ENCODE measurements at regions of chr6 and their contacts with region 1.

Region 1: GRCh38 chr6:22091424-22091948 is 205.3 kb downstream of the PRL start:
- DNase-seq: no peak
- H3K4me3 Mint-ChIP-seq: no peak overlapping the region
- H3K27ac Mint-ChIP-seq: no peak overlapping the region
- H3K4me1 Mint-ChIP-seq: no peaks in the 10 kb centered on the region
- H3K27me3 Mint-ChIP-seq: no peaks in the 10 kb centered on the region

Region 2: GRCh38 chr6:22017272-22017671 is 74.2 kb before region 1 on chr6:
- CTCF ChIA-PET with region 1: no interaction called
- POLR2A ChIA-PET with region 1: no interaction called
- intact Hi-C with region 1: no loop called
- DNase-seq: no peak
- H3K4me3 Mint-ChIP-seq: no peak overlapping the region
- H3K27ac Mint-ChIP-seq: no peak overlapping the region
- H3K4me1 Mint-ChIP-seq: no peaks in the 10 kb centered on the region
- H3K27me3 Mint-ChIP-seq: no peaks in the 10 kb centered on the region

Region 3: DNA sequence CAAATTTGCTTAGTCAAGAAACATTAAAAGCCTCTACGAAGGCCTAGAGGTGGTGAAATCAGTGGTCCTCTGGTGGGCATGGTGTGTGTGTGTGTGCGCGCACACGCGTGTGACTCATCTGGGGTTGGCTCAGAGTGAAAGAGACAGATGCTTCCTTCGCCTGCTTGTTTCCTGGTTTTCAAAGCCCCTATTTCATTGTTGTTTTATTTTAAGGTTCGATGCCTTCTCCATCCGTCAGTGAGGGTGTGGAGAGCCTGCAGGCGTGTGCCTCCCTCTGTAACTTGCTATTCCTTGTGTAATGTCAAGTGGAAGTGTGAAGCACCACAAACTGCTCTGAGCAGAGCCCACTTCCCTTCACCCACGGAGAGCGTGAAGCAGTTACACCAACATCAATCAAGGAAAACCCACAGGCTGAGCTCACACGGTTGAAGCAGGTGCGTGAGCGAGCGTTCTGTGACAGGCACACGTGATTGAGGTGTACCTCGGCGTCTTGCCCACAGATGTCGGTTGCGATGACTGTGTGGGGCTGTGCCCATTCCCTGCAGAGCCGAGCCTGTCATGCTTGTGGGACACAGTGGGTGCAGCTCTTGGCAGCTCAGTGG is 28.6 kb before region 1 on chr6:
- CTCF ChIA-PET with region 1: no interaction called
- POLR2A ChIA-PET with region 1: no interaction called
- intact Hi-C with region 1: loop called (anchors 1 kb)
- DNase-seq: peak; percentile 54
- H3K4me3 Mint-ChIP-seq: no peak overlapping the region
- H3K27ac Mint-ChIP-seq: no peak overlapping the region
- H3K4me1 Mint-ChIP-seq: peaks cover 6% of the 10 kb centered on the region
- H3K27me3 Mint-ChIP-seq: peaks cover 8% of the 10 kb centered on the region

Region 4: DNA sequence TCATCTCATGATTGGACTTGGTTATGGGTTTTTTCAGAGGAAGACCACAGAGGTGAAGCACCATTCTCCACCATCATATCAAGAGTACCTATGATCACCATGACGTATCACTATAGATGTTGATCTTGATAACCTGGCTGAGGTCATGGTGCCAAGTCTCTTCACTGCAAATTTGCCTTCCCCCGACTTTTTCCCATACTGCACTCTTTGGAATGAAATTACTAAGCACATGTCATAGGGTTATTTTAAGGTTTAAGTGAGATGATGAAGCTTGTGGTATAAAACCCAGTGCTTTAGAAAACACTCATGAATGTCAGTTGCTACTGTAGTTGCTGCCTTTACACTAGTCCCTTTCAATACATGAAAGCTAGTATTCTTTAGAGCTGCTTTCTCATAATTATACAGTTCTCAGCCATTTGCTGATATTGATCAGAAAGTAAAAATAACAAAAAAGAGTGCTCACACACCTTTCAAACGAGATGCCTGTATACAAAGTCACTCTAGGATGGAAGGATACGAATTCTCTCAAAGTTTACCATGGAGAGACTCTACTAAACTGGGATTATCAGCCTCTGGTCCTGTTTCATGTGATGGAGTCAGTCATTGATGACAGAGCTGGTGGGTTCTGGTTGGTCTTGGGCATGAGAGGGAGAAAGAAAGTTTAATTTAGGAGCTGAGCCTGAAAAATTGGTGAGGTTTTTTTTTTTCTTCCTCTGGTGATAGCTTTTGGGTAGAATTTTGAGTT is 22.8 kb before region 1 on chr6:
- CTCF ChIA-PET with region 1: no interaction called
- POLR2A ChIA-PET with region 1: no interaction called
- intact Hi-C with region 1: loop called (anchors 1 kb)
- DNase-seq: no peak
- H3K4me3 Mint-ChIP-seq: no peak overlapping the region
- H3K27ac Mint-ChIP-seq: no peak overlapping the region
- H3K4me1 Mint-ChIP-seq: no peaks in the 10 kb centered on the region
- H3K27me3 Mint-ChIP-seq: no peaks in the 10 kb centered on the region